ENCODE measurements at regions of chr5 and their contacts with region 1.

Region 1: DNA sequence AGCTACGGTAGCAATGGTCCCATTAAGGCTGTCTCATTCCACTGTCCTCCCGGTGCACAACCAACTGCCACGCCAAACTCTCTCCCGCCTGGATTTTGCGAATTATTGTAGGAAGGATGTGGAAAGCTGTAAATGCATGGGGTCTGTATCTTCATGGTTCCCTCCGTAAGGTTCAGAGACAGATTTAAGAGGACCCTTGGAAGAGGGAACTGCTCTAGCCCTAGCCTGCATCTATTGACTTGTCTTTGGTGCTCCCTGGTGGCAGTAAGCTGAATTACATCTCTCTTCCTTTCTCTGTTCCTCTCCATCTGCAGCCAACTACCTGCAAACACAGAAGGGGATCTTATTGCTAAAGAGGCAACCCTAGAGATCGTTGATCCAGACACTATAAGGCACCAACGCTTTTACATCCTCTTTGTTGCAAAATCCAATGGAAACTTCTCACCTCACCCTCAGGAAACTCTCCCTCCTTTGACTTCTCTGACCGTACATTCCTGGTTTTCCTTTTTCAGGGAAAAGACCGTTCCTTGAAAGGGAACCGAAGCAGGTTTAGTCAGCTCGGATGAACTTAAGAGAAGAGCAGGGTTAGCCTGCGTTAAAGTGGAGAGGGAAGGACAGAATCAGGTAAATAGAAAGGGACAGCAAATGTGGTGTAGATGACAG is 11.9 kb downstream of the CAPSL start:
- DNase-seq: peak; percentile 17
- ATAC-seq: peak; percentile 87
- H3K4me3 ChIP-seq: no peak overlapping the region
- H3K27ac ChIP-seq: no peak overlapping the region
- H3K4me1 ChIP-seq: no peaks in the 10 kb centered on the region
- H3K27me3 ChIP-seq: no peaks in the 10 kb centered on the region; a peak in 1 of 5 replicates
- CTCF ChIP-seq: peak; percentile 84
- EP300 ChIP-seq: no peak
- POLR2A ChIP-seq: no peak
- RAD21 ChIP-seq: peak; percentile 48; the same call in 1 of the 2 replicates

Region 2: DNA sequence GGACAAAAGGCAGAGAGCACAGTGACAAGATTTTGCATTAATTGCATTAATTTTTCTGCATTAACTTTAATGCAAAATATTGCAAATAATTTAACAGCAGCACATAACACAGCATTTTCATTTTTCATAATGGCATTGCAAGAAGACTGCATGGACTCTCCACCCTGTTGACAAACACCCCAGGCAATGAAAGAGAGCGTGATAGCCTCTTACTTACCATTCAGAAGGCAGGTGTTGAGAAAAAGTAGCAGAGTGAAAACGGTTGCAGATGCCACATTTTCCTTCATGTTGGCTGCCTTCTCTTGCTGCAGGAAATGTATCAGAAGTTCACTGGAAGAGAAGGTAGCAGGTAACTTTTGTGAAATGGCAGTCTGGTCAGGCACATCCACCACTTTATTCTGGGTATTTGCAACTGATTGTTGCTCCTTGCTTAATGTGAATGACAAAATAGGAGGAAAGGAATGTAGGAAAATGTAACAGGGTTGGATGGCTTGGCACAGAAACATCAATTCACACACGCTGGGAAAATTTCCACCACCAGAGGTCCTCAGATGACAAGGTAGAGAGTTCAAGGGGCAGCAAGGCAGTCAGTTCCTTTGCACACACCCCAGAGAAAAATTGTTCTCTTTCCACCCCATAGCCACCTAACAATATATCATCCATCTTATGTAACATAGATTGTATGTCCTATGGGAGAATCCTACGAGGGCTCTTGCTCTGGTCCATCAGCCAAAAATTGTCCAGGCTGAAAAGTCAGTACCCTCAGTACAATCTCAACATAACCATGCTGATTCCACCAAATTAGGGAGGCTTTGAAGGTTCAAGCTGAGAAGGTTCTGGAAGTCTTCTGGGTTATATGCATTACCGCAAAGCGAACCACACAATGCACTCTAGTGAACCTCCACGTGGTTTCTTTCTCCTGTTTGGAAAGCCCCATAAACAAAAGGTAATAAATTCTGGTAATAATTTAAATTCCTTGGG is 836.9 kb before region 1 on chr5:
- CTCF ChIA-PET with region 1: no interaction called
- POLR2A ChIA-PET with region 1: no interaction called
- in situ Hi-C with region 1: no loop called
- intact Hi-C with region 1: loop called (anchors 5 kb)
- DNase-seq: peak; percentile 64
- ATAC-seq: peak; percentile 85
- H3K4me3 ChIP-seq: no peak overlapping the region
- H3K27ac ChIP-seq: no peak overlapping the region
- H3K4me1 ChIP-seq: peaks cover 13% of the 10 kb centered on the region
- H3K27me3 ChIP-seq: no peaks in the 10 kb centered on the region
- CTCF ChIP-seq: peak; percentile 89
- EP300 ChIP-seq: no peak
- POLR2A ChIP-seq: no peak
- RAD21 ChIP-seq: peak; percentile 93

Region 3: GRCh38 chr5:35617435-35618303 is 308.9 kb before region 1 on chr5 and contains the start of gene SPEF2:
- CTCF ChIA-PET with region 1: interaction called, 10 read pairs
- POLR2A ChIA-PET with region 1: no interaction called
- in situ Hi-C with region 1: no loop called
- intact Hi-C with region 1: loop called (anchors 1 kb)
- DNase-seq: peak; percentile 84
- ATAC-seq: peak; percentile 99
- H3K4me3 ChIP-seq: peak within 1 kb of the TSS; percentile 85 to 96 (median 92)
- H3K27ac ChIP-seq: peak within 1 kb of the TSS; percentile 30
- H3K4me1 ChIP-seq: peaks cover 13% of the 10 kb centered on the region
- H3K27me3 ChIP-seq: no peaks in the 10 kb centered on the region
- CTCF ChIP-seq: peak; percentile 97
- EP300 ChIP-seq: no peak
- POLR2A ChIP-seq: no peak
- RAD21 ChIP-seq: peak; percentile 70; the same call in 1 of the 2 replicates
- total RNA-seq, gene SPEF2: 2.3 and 2.4 TPM in 2 replicates

Region 4: GRCh38 chr5:35651002-35651756 is 275.3 kb before region 1 on chr5:
- CTCF ChIA-PET with region 1: no interaction called
- POLR2A ChIA-PET with region 1: interaction called, 3 read pairs
- in situ Hi-C with region 1: loop called (anchors 5 kb)
- intact Hi-C with region 1: loop called (anchors 1 kb)
- DNase-seq: peak; percentile 32
- ATAC-seq: peak; percentile 95
- H3K4me3 ChIP-seq: no peak overlapping the region
- H3K27ac ChIP-seq: no peak overlapping the region
- H3K4me1 ChIP-seq: no peaks in the 10 kb centered on the region
- H3K27me3 ChIP-seq: no peaks in the 10 kb centered on the region
- CTCF ChIP-seq: peak; percentile 69
- EP300 ChIP-seq: no peak
- POLR2A ChIP-seq: no peak
- RAD21 ChIP-seq: no peak

Region 5: GRCh38 chr5:35777358-35778087 is 149.0 kb before region 1 on chr5:
- CTCF ChIA-PET with region 1: interaction called, 38 read pairs
- POLR2A ChIA-PET with region 1: no interaction called
- in situ Hi-C with region 1: loop called (anchors 10 kb)
- intact Hi-C with region 1: no loop called
- DNase-seq: peak; percentile 63
- ATAC-seq: peak; percentile 75
- H3K4me3 ChIP-seq: no peak overlapping the region
- H3K27ac ChIP-seq: no peak overlapping the region
- H3K4me1 ChIP-seq: no peaks in the 10 kb centered on the region
- H3K27me3 ChIP-seq: no peaks in the 10 kb centered on the region; a peak in 1 of 5 replicates
- CTCF ChIP-seq: peak; percentile 63
- EP300 ChIP-seq: no peak
- POLR2A ChIP-seq: no peak
- RAD21 ChIP-seq: 0 out of 2 replicates have a peak, but pooled peaks have one; percentile 20

Region 6: GRCh38 chr5:35902046-35902676 is 24.4 kb before region 1 on chr5:
- CTCF ChIA-PET with region 1: no interaction called
- POLR2A ChIA-PET with region 1: no interaction called
- in situ Hi-C with region 1: no loop called
- intact Hi-C with region 1: no loop called
- DNase-seq: no peak
- ATAC-seq: no peak
- H3K4me3 ChIP-seq: no peak overlapping the region
- H3K27ac ChIP-seq: no peak overlapping the region
- H3K4me1 ChIP-seq: no peaks in the 10 kb centered on the region
- H3K27me3 ChIP-seq: no peaks in the 10 kb centered on the region
- CTCF ChIP-seq: no peak
- EP300 ChIP-seq: no peak
- POLR2A ChIP-seq: no peak
- RAD21 ChIP-seq: no peak